ENCODE measurements at regions of chr10 and their contacts with region 1.

Region 1: DNA sequence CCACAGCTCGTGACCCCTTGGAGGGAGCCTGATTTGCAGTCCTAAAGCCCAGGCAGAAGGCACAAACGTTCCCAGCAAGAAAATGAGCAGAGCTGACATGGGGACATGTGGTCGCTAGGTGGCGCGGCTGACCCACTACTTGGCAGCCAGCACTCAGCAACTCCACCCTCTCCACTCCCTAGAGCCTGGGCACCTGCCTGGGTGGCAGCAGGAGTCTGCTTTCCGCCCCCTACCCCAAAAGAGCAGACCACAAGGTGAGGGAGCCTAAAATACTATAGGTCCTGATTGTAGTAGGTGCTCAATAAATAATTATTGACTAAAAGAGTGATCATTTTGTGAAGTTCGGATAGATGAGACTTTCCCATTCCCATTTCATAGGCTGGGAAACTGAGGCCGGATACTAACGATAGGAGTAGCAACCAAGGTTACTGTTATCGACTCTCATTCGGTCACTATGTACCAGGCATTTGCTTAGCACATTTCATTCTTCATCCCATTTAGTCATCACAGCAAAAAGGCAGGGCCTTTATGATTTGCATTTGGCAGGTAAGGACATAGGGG is 57.4 kb downstream of the NEUROG3 start:
- DNase-seq: peak; percentile 89
- ATAC-seq: peak; percentile 97
- H3K4me3 Mint-ChIP-seq: no peak overlapping the region
- H3K27ac Mint-ChIP-seq: no peak overlapping the region
- H3K4me1 Mint-ChIP-seq: no peaks in the 10 kb centered on the region
- H3K27me3 Mint-ChIP-seq: peaks cover 8% of the 10 kb centered on the region
- CTCF ChIP-seq: peak; percentile 79

Region 2: DNA sequence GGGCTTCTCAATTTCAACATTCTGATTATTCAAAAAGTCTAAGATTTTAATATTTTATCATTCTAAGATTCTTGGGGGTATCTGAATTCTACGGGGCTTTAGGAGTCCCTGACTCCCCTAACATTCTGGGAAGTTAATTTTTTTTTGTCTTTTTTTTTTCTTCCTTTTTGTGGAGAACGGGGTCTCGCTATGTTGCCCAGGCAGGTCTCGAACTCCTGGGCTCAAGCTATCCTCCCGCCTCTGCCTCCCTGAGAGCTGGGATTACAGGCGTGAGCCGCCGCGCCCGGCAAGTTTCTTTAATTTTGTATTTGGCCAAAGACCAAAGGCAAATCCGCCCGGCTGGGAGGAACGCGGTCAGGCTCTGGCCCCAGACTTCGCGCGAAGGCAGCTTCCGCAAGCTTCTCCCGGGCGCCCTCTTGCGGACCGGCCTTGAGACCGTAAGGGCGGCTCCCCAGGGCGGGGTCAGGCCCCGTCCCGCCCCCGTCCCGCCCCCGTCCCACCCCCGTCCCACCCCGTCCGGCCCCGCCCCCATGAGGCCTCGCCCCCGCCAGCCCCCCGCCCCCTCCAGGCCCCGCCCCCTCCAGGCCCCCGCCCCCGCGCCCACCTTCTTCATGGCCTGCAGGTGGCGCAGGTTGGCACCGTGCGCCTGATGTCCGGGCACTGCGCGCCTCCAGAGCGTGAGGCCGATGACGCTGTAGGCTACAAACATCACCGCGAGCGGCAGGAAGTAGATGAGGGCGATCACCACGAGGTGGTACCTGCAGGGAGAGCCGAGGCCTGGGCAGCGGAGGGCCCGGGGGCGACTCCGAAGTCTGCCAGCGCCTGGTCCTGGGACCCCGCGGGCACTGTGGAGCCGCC is 107.2 kb before region 1 on chr10:
- CTCF ChIA-PET with region 1: interaction called, 18 read pairs
- POLR2A ChIA-PET with region 1: no interaction called
- intact Hi-C with region 1: no loop called
- DNase-seq: peak; percentile 94
- ATAC-seq: peak; percentile 89
- H3K4me3 Mint-ChIP-seq: peak overlapping the region; percentile 47
- H3K27ac Mint-ChIP-seq: peak overlapping the region; percentile 80
- H3K4me1 Mint-ChIP-seq: peaks cover 24% of the 10 kb centered on the region
- H3K27me3 Mint-ChIP-seq: no peaks in the 10 kb centered on the region
- CTCF ChIP-seq: peak; percentile 82

Region 3: GRCh38 chr10:69497606-69498390 is 18.0 kb before region 1 on chr10:
- CTCF ChIA-PET with region 1: interaction called, 13 read pairs
- POLR2A ChIA-PET with region 1: no interaction called
- intact Hi-C with region 1: no loop called
- DNase-seq: no peak
- ATAC-seq: peak; percentile 68
- H3K4me3 Mint-ChIP-seq: no peak overlapping the region
- H3K27ac Mint-ChIP-seq: no peak overlapping the region
- H3K4me1 Mint-ChIP-seq: no peaks in the 10 kb centered on the region
- H3K27me3 Mint-ChIP-seq: no peaks in the 10 kb centered on the region
- CTCF ChIP-seq: no peak

Region 4: DNA sequence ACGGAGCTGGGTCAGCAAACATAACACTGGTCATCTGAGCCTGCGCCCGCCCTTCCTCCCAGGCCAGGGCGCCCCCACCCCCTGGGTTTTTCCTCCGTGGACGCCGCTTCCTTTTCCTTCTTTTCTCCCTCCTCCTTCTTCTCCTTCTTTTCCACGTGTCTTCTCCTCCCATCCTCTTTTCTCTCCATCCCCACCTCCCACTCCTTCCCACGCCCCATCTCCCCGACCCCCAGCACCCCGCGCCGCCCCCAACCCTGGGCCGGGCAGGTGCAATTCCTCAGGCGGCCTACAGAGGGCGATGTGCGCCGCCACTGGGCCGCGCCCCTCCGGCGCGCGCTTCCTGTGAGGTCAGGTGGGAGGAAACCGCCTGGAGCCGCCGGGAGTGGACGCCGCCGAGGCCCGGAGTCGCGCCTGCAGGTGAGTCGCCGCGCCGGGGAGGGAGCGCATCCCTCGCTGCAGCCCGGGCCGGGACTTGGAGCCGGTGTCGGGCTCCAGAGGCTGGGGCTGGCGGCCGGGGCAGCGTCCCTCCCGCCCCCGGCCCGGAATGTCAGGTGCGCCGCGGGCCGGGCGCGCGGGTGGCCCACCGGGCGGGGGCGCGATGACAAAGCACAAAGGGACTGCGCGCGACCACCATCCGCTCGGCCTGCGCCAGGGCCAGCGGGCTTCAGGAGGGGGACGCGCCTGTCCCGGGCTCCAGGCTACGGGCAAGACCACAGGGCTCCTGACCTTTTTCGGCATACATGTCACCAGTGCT is 114.3 kb after region 1 on chr10 and contains the start of gene FAM241B:
- CTCF ChIA-PET with region 1: interaction called, 397 read pairs
- POLR2A ChIA-PET with region 1: no interaction called
- intact Hi-C with region 1: no loop called
- DNase-seq: peak; percentile 81
- ATAC-seq: peak; percentile 98
- H3K4me3 Mint-ChIP-seq: peak within 1 kb of the TSS; percentile 64
- H3K27ac Mint-ChIP-seq: peak within 1 kb of the TSS; percentile 40
- H3K4me1 Mint-ChIP-seq: peaks cover 6% of the 10 kb centered on the region
- H3K27me3 Mint-ChIP-seq: no peaks in the 10 kb centered on the region
- CTCF ChIP-seq: peak; percentile 100
- total RNA-seq, gene FAM241B: 10.8 to 12.5 TPM

Region 5: DNA sequence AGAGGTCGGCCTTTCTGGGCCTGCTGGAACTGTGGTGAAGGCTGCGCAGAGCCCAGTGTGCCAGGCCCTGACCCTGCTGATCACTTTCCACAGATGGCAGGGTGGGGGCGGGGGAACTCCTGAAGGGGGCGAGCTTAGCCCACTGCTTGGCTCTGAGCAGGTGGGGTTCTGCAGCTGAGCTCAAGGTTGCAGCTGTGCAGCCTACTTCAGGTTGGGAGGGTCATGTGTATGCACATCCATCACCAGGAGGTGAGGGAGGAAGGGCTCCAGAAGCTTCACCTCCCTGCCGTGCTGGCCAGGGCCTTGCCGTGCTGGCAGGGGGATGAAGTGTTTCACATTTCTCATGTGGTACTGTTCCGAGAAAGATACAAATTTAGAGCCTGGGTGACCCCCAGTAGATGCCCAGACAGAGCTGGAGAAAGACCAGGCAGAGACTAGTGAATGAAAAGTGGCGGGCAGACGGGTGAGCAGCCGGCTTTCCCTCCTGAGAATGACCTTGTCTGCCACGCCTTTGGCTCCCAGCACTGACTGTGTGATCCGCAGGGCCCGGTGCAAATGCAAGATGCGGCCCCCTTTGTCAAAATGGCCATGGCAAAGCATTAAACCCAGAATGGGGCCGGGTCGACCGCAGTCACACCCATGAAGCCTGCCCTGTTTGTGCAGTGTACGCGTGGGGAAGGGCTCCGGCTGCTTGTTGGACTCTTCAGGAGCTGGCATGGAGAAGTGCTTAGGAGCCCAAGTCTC is 139.5 kb after region 1 on chr10:
- CTCF ChIA-PET with region 1: interaction called, 10 read pairs
- POLR2A ChIA-PET with region 1: no interaction called
- intact Hi-C with region 1: no loop called
- DNase-seq: no peak
- ATAC-seq: no peak
- H3K4me3 Mint-ChIP-seq: no peak overlapping the region
- H3K27ac Mint-ChIP-seq: no peak overlapping the region
- H3K4me1 Mint-ChIP-seq: peaks cover 12% of the 10 kb centered on the region
- H3K27me3 Mint-ChIP-seq: peaks cover 7% of the 10 kb centered on the region
- CTCF ChIP-seq: no peak

Region 6: GRCh38 chr10:69716711-69717560 is 201.2 kb after region 1 on chr10:
- CTCF ChIA-PET with region 1: interaction called, 31 read pairs
- POLR2A ChIA-PET with region 1: no interaction called
- intact Hi-C with region 1: loop called (anchors 10 kb)
- DNase-seq: peak; percentile 80
- ATAC-seq: peak; percentile 70
- H3K4me3 Mint-ChIP-seq: no peak overlapping the region
- H3K27ac Mint-ChIP-seq: no peak overlapping the region
- H3K4me1 Mint-ChIP-seq: no peaks in the 10 kb centered on the region
- H3K27me3 Mint-ChIP-seq: no peaks in the 10 kb centered on the region
- CTCF ChIP-seq: peak; percentile 77